ENCODE measurements at regions of chr15 and their contacts with region 1.

Region 1: DNA sequence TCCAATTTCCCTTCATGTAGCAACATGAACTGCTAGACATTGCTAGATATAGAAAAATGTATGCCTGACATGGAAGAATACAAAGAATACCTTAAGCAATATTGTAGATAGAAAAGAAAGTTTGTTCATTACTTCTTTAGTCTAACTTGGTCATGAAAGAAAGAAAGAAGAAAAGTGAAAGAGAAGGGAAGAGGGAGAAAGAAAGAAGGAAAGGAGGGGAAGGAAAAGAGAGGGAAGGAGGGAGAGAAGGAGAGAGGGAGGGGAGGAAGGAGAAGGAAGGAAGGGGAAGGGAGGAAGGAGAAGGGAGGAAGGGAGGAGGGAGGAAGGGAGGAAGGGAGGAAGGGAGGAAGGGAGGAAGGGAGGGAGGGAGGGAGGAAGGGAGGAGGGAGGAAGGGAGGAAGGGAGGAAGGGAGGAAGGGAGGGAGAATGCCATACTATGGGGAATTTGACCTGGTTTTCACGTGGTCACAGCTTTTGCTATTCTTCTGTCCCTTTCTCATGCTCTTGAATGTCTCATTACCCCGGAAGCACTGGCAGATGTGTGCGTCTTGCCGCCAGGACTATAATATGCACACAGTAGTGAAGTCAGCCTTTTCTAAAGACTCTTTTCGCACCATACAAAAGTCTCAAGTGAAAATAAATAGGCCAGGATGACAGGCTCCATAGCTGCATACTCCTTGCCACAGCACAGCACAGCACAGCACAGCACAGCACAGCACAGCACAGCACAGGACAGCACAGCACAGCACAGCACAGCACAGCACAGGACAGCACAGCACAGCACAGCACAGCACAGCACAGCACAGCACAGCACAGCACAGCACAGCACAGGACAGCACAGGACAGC is 78.2 kb downstream of the CHAC1 start:
- DNase-seq: no peak
- H3K4me3 Mint-ChIP-seq: no peak overlapping the region
- H3K27ac Mint-ChIP-seq: no peak overlapping the region
- H3K4me1 Mint-ChIP-seq: peaks cover 3% of the 10 kb centered on the region
- H3K27me3 Mint-ChIP-seq: no peaks in the 10 kb centered on the region

Region 2: DNA sequence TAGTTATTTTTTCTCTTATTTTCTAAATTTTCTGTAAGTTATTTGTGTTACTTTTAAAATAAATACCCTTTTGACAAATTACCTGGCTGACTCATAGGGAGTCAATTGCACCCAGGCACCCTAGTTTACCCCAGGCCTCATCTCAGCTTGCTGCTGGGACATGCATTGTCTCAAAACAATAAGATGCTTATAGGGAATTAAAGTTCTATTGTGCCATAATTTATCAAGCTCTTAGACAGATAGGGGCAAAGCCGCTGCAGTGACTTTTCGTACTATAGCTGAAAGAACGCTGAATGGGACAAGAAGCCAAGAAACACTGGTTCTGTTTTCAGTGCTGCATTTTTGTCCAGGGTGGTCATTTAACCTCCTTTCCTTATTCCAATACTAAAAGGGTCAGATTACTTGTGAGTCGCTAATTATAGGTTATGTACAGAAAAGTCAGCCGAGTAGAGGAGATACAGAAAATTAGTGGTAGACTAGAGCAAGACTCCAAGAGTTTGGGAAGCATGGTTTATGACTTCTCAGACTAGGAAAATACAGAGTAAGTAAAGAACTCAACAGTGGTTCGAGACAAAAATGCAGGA is 148.8 kb after region 1 on chr15:
- CTCF ChIA-PET with region 1: interaction called, 5 read pairs
- POLR2A ChIA-PET with region 1: no interaction called
- intact Hi-C with region 1: loop called (anchors 10 kb)
- DNase-seq: no peak
- H3K4me3 Mint-ChIP-seq: no peak overlapping the region
- H3K27ac Mint-ChIP-seq: no peak overlapping the region
- H3K4me1 Mint-ChIP-seq: no peaks in the 10 kb centered on the region
- H3K27me3 Mint-ChIP-seq: no peaks in the 10 kb centered on the region